ENCODE measurements at regions of chr6 and their contacts with region 1.

Region 1: DNA sequence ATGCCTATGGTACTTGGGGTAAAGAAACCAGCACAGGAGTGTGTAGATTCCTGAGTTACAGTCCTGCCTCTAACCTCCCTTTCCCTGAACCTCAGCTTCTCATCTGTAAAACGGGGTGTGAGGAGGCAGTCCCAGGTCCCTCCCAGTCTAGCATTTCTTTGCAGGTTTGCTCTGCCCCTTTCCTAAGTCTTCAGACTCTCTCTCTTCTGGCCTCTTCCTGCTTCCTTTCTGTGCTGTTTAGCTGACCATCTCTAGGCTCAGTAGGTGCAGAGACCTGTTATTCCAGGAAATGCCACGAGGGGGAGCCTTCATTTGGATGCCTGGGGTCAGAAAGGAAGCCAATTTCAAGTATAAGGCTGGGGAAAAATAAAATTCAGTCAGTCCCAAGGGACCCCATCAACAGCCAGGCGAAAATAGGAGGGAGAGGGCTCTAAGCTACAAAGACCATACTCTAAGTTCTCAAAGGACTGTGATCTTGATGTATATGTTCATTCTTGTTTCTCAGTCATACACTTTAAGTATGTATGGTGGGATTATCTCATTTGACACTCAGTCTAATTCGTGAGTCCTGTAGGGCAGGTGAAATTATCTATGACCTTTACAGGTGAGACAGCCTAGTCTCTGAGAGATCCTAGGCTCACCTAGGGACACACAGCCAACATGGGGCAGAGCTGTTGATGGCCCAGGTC is 89.1 kb downstream of the NCR2 start:
- DNase-seq: peak; percentile 92
- ATAC-seq: peak; percentile 55
- H3K4me3 Mint-ChIP-seq: no peak overlapping the region
- H3K27ac Mint-ChIP-seq: no peak overlapping the region
- H3K4me1 Mint-ChIP-seq: peaks cover 10% of the 10 kb centered on the region
- H3K27me3 Mint-ChIP-seq: peaks cover 16% of the 10 kb centered on the region
- CTCF ChIP-seq: peak; percentile 80

Region 2: DNA sequence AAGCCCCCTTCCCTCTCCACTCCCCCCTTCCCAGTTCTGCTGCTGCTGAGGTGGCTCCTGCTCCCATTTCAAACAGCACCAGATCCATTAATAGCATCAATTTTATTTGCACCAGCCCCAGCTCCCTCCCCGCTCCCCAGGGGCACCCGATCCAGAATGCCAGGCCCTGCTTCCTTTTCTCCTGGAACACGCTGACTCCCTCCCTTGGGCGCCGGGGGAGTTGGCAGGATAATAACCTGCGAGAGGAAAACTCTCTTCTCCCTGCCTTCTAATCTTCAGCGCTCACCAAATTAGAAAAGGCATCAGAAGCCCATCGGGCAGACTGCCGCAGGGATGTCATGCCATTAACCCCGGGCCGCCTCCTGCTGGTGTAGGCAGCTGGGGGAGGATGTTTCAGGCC is 11.3 kb before region 1 on chr6:
- CTCF ChIA-PET with region 1: interaction called, 12 read pairs
- POLR2A ChIA-PET with region 1: no interaction called
- intact Hi-C with region 1: no loop called
- DNase-seq: no peak
- ATAC-seq: no peak
- H3K4me3 Mint-ChIP-seq: no peak overlapping the region
- H3K27ac Mint-ChIP-seq: no peak overlapping the region
- H3K4me1 Mint-ChIP-seq: peaks cover 10% of the 10 kb centered on the region
- H3K27me3 Mint-ChIP-seq: peaks cover 30% of the 10 kb centered on the region
- CTCF ChIP-seq: no peak

Region 3: DNA sequence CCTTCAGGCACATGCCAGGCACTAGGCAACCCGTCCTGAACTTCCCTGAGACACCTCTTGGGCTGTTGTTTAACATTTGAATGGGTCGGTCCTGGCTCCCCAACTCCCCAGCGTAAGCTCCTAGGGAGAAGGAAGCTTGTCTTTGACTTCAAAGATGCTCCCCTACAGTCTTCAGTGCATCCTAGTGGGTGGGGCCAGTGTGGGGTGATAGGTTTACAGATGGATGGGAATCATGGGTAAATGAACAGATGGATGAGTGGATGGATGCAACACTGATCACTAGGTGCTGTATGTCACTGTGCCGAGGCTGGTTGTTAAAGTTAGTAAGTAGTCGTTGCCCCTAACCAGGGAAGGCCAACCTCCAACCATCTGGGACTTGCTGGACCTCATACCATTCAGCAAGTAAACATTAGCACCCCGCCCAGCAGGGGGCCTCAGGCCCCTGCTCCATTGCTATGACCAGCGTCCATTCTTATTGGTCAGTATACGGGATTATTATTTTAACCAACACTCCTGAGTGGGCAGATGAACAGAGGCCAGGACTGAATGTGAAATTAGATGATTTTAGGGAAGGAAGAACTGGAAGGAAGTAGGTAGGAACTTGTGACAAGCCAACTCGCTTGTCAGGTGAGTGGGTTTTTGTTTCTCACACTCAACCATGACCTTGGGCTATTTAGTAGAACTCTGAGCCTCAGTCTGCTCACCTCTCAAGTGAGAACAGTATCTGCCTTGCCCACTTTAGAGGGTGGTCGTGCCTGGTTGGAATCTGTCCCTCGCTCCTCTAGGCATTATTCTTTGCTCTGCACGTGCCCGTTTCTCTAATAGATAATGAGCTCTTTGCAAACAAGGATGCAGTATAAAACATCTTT is 38.8 kb after region 1 on chr6:
- CTCF ChIA-PET with region 1: interaction called, 20 read pairs
- POLR2A ChIA-PET with region 1: no interaction called
- intact Hi-C with region 1: no loop called
- DNase-seq: peak; percentile 58
- ATAC-seq: peak; percentile 70
- H3K4me3 Mint-ChIP-seq: no peak overlapping the region
- H3K27ac Mint-ChIP-seq: no peak overlapping the region
- H3K4me1 Mint-ChIP-seq: no peaks in the 10 kb centered on the region
- H3K27me3 Mint-ChIP-seq: peaks cover 24% of the 10 kb centered on the region
- CTCF ChIP-seq: peak; percentile 53

Region 4: GRCh38 chr6:41545703-41546474 is 121.4 kb after region 1 on chr6 and contains the start of gene FOXP4:
- CTCF ChIA-PET with region 1: interaction called, 15 read pairs
- POLR2A ChIA-PET with region 1: no interaction called
- intact Hi-C with region 1: loop called (anchors 10 kb)
- DNase-seq: peak; percentile 91
- ATAC-seq: peak; percentile 86
- H3K4me3 Mint-ChIP-seq: peak within 1 kb of the TSS; percentile 81
- H3K27ac Mint-ChIP-seq: peak within 1 kb of the TSS; percentile 75
- H3K4me1 Mint-ChIP-seq: peaks cover 20% of the 10 kb centered on the region
- H3K27me3 Mint-ChIP-seq: peaks cover 13% of the 10 kb centered on the region
- CTCF ChIP-seq: no peak
- total RNA-seq, gene FOXP4: 11.0 to 11.8 TPM

Region 5: DNA sequence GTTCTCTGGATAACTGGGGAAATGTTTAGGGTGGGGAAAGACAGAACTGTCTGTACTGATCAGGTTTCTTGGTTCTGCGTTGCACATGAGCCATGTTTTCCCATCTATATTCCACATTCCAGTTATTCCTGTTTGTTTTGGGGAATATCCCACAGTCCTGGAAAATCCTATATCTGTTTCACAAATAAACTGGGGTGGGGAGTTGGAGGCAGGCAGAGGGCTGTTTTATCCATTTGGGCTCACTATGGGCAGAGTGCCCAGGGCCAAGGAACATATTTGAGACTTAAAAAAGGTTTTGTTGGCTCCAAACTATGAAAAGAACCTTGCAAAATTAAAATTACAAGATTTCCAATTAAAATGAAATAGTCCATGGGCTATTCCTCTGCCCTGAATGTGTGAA is 143.2 kb after region 1 on chr6:
- CTCF ChIA-PET with region 1: no interaction called
- POLR2A ChIA-PET with region 1: no interaction called
- intact Hi-C with region 1: no loop called
- DNase-seq: no peak
- ATAC-seq: no peak
- H3K4me3 Mint-ChIP-seq: no peak overlapping the region
- H3K27ac Mint-ChIP-seq: no peak overlapping the region
- H3K4me1 Mint-ChIP-seq: peaks cover 13% of the 10 kb centered on the region
- H3K27me3 Mint-ChIP-seq: no peaks in the 10 kb centered on the region
- CTCF ChIP-seq: no peak

Region 6: GRCh38 chr6:41602864-41603608 is 178.5 kb after region 1 on chr6:
- CTCF ChIA-PET with region 1: interaction called, 31 read pairs
- POLR2A ChIA-PET with region 1: no interaction called
- intact Hi-C with region 1: no loop called
- DNase-seq: peak; percentile 82
- ATAC-seq: peak; percentile 90
- H3K4me3 Mint-ChIP-seq: no peak overlapping the region
- H3K27ac Mint-ChIP-seq: no peak overlapping the region
- H3K4me1 Mint-ChIP-seq: peaks cover 2% of the 10 kb centered on the region
- H3K27me3 Mint-ChIP-seq: no peaks in the 10 kb centered on the region
- CTCF ChIP-seq: peak; percentile 87